ENCODE measurements at regions of chr3 and their contacts with region 1.

Region 1: DNA sequence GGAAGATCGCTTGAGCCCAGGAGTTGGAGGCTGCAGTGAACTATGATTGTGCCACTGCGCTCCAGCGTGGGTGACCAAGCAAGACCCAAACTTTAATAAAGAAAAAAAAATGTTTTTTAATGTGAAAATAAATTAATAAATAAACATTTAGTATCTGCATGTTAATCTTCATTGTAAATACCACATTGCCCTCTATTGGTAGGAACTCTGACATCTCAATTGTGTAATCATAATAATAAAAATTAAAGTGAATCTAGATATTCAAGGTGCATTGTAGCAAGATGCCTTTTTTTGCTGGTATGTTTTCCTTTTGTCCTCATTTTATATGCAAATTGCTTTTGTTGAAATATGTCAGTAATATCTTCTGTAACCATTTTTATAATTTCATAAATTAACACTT is 95.0 kb upstream of the LIMD1 start:
- DNase-seq: peak; percentile 34
- H3K4me3 ChIP-seq: no peak overlapping the region
- H3K27ac ChIP-seq: no peak overlapping the region
- H3K4me1 ChIP-seq: peaks cover 31% of the 10 kb centered on the region
- H3K27me3 ChIP-seq: no peaks in the 10 kb centered on the region
- CTCF ChIP-seq: peak; percentile 49; the same call in 1 of the 2 replicates

Region 2: DNA sequence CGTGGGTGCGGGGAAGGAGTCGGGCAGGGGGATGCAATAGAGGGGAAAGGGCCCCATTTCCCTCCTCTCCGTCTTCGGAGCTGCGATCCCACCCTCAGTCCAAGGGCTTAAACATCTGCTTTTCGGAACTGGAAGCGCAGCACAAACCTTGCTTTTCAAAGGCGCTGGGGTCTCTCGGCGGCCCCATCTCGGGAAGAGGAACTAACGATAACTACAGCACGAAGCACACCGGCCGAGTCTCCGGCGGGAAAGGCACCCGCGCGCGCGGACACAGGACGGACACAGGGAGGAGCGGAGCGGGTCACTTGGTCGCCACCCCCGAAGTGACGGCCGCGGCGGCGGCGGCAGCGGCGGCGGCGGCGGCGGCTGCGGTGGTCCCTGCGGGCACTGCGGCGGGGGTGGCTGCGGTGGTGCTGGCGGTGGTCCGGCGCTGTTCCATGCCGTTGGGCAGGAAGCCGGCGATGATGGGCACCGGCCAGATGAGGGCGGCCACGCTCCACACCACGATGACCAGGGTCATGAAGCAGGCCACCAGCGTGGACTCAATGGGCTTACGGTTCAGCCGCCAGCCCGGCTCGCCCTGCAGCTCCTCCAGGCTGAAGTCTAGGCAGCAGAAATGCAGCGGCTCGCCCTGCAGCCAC is 274.6 kb before region 1 on chr3:
- CTCF ChIA-PET with region 1: no interaction called
- POLR2A ChIA-PET with region 1: no interaction called
- intact Hi-C with region 1: loop called (anchors 5 kb)
- DNase-seq: peak; percentile 26
- H3K4me3 ChIP-seq: peak overlapping the region; percentile 54
- H3K27ac ChIP-seq: no peak overlapping the region
- H3K4me1 ChIP-seq: peaks cover 4% of the 10 kb centered on the region
- H3K27me3 ChIP-seq: no peaks in the 10 kb centered on the region
- CTCF ChIP-seq: peak; percentile 25; the same call in 1 of the 2 replicates

Region 3: GRCh38 chr3:45441584-45442310 is 57.8 kb before region 1 on chr3:
- CTCF ChIA-PET with region 1: no interaction called
- POLR2A ChIA-PET with region 1: no interaction called
- intact Hi-C with region 1: loop called (anchors 2 kb)
- DNase-seq: peak; percentile 57
- H3K4me3 ChIP-seq: no peak overlapping the region
- H3K27ac ChIP-seq: peak overlapping the region; percentile 45
- H3K4me1 ChIP-seq: peaks cover 21% of the 10 kb centered on the region
- H3K27me3 ChIP-seq: no peaks in the 10 kb centered on the region
- CTCF ChIP-seq: no peak